ENCODE measurements at regions of chrX and their contacts with region 1.

Region 1: GRCh38 chrX:145190801-145191389 is 56.4 kb upstream of the SPANXN1 start:
- DNase-seq: no peak
- H3K4me3 ChIP-seq: no peak overlapping the region
- H3K27ac ChIP-seq: no peak overlapping the region
- H3K4me1 ChIP-seq: no peaks in the 10 kb centered on the region
- H3K27me3 ChIP-seq: no peaks in the 10 kb centered on the region
- CTCF ChIP-seq: peak; percentile 16

Region 2: GRCh38 chrX:143664302-143664701 is 1526.6 kb before region 1 on chrX:
- intact Hi-C with region 1: loop called (anchors 10 kb)
- DNase-seq: no peak
- H3K4me3 ChIP-seq: no peak overlapping the region
- H3K27ac ChIP-seq: no peak overlapping the region
- H3K4me1 ChIP-seq: no peaks in the 10 kb centered on the region
- H3K27me3 ChIP-seq: no peaks in the 10 kb centered on the region
- CTCF ChIP-seq: peak; percentile 44

Measured in colonic mucosa (tissue), 4 donors.